ENCODE measurements at regions of chr20 and their contacts with region 1.

Region 1: DNA sequence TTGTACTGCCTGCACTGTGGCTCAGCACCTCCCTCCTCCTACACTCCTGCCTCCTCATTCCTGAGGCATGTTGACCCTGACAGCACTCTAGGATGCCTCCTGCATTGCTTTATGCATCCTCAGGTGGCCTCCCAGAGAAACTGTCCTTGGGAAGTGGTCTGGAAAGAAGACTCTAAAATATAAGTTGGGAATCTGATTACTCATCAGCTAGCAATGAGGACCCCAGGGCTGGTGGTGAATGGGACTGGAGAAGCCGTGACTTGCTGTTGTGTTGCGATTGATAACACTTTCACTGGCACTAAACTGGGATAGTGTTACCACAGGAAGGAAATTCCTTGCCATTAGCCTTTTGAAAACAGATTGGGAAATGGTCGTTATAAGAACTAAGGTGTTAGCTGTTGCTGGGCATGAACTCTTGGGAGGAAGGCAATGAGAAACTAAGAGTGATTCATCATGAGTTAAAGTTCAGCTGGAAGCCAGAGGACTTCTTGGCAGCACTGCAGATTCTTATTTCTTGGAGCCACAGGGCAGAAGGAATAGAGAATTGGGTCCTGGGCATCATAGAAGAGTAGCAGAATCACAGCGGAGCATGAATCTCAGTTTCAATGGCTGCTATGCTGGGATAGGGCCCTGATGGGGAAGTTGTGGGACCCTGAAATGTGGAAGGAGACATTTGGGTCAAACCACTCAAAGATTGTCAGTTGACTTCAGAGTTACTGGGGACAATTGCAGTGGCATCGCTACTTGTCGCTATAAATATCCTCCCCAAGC is 10.1 kb upstream of the SIRPD start:
- H3K4me3 Mint-ChIP-seq: no peak overlapping the region
- H3K27ac Mint-ChIP-seq: peak overlapping the region; percentile 61
- H3K4me1 Mint-ChIP-seq: peaks cover 80% of the 10 kb centered on the region
- H3K27me3 Mint-ChIP-seq: no peaks in the 10 kb centered on the region

Region 2: DNA sequence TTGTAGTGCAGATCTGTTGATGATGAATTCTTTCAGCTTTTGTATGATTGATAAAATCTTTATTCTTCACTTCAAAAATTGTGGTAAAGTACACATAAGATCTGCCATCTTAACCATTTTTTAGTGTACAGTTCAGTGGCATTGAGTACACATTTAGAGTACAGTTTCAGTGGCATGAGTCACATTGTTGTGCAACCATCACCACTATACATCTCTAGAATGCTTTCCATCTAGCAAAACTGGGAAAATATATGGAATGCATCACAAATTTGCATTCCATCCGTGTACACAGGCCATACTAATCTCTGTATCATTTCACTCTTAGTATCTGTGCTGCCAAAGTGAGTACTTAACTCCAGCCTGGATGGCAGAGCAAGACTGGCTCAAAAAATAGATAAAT is 38.8 kb before region 1 on chr20:
- intact Hi-C with region 1: loop called (anchors 5 kb)
- H3K4me3 Mint-ChIP-seq: no peak overlapping the region
- H3K27ac Mint-ChIP-seq: no peak overlapping the region
- H3K4me1 Mint-ChIP-seq: peaks cover 42% of the 10 kb centered on the region
- H3K27me3 Mint-ChIP-seq: no peaks in the 10 kb centered on the region